Activated CD8-positive, alpha-beta T cell treated with anti-CD3 and anti-CD28 coated beads for 36 hours (primary cell): ENCODE measurements at regions of chr19 and their contacts with region 1.

Region 1: DNA sequence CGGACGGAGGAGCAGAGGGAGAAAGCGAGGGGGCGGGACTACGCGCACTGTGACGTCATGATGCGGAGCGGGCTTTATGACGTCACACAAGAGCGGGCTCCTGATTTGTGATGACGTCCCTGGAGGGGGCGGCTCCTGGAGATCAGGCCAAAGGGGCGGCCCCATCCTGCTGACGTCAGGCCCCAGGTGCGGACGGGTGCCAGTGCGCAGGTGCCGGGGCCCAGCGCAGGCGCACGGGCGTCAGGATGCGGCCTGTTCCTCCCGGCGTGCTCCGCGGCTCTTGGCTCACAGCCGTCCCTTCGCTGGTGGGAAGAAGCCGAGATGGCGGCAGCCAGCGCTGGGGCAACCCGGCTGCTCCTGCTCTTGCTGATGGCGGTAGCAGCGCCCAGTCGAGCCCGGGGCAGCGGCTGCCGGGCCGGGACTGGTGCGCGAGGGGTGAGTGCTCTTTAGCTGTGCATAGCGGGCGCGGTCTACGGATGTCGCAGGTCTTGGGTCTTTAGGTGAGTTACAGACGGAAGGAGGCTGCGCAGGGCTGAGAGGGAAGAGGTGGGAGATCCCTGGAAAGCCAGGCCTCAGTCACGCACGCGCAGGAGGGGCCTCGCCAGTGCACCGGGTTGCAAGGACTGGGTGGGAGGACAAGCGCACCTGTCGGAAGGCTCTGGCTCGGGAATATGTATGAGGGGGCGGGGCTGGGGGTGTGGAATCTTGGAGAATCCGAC is at the starts of genes EMC10 and GARIN5A:
- DNase-seq: peak; percentile 98
- ATAC-seq: peak; percentile 98
- H3K4me3 Mint-ChIP-seq: peak within 1 kb of the TSS; percentile 99
- H3K27ac Mint-ChIP-seq: peak within 1 kb of the TSS; percentile 93
- H3K4me1 Mint-ChIP-seq: peaks cover 23% of the 10 kb centered on the region
- H3K27me3 Mint-ChIP-seq: no peaks in the 10 kb centered on the region
- CTCF ChIP-seq: no peak
- total RNA-seq, gene EMC10: 28.7 to 31.2 TPM
- total RNA-seq, gene GARIN5A: 0.36 to 1.5 TPM

Region 2: DNA sequence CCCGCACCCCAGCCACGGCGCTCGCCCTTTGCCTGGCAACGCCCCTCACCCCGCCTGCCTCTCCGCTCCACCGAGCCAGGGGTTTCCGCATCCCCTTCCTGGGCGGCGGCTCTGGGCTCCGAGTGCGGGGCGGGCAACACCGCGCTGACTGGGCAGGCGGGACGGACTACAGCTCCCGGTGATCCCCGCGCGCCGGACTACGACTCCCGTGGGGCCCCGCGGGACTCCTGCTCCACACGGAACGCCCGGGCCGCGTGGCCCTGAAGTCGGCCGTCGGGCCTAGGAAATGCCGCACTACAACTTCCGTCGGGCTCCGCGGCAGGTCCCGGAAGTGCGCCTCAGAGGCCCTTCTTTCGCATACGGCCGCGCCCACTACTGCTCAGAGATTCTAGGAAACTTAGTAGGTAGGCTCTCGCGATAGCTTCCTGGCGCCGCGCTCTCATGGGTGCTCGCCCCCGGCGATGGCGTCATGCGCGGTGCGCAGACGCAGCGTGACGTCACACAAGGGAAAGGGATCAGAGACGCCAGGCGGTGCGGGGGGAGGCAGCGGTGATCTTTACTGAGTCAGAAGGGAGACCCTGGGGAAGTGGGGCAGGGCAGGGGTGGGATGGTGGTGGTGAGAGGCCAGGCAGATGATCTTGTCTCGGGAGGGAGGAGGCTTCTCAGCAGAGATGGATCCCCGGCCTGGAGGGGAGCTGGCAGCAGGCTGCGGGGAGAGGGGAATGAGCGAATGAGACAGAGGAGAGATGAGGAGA is 34.9 kb after region 1 on chr19 and contains the start of gene JOSD2:
- CTCF ChIA-PET with region 1: no interaction called
- POLR2A ChIA-PET with region 1: interaction called, 9 read pairs
- intact Hi-C with region 1: loop called (anchors 2 kb)
- DNase-seq: peak; percentile 100
- ATAC-seq: peak; percentile 94
- H3K4me3 Mint-ChIP-seq: peak within 1 kb of the TSS; percentile 91
- H3K27ac Mint-ChIP-seq: peak within 1 kb of the TSS; percentile 98
- H3K4me1 Mint-ChIP-seq: peaks cover 13% of the 10 kb centered on the region
- H3K27me3 Mint-ChIP-seq: peaks cover 5% of the 10 kb centered on the region
- CTCF ChIP-seq: no peak
- total RNA-seq, gene JOSD2: 21.6 to 22.6 TPM

Region 3: GRCh38 chr19:50522881-50523280 is 46.5 kb after region 1 on chr19:
- CTCF ChIA-PET with region 1: no interaction called
- POLR2A ChIA-PET with region 1: no interaction called
- intact Hi-C with region 1: no loop called
- DNase-seq: no peak
- ATAC-seq: no peak
- H3K4me3 Mint-ChIP-seq: no peak overlapping the region
- H3K27ac Mint-ChIP-seq: no peak overlapping the region
- H3K4me1 Mint-ChIP-seq: no peaks in the 10 kb centered on the region
- H3K27me3 Mint-ChIP-seq: peaks cover 2% of the 10 kb centered on the region
- CTCF ChIP-seq: no peak